Pancreas (tissue), 10 donors: ENCODE measurements at regions of chr15 and their contacts with region 1.

Region 1: DNA sequence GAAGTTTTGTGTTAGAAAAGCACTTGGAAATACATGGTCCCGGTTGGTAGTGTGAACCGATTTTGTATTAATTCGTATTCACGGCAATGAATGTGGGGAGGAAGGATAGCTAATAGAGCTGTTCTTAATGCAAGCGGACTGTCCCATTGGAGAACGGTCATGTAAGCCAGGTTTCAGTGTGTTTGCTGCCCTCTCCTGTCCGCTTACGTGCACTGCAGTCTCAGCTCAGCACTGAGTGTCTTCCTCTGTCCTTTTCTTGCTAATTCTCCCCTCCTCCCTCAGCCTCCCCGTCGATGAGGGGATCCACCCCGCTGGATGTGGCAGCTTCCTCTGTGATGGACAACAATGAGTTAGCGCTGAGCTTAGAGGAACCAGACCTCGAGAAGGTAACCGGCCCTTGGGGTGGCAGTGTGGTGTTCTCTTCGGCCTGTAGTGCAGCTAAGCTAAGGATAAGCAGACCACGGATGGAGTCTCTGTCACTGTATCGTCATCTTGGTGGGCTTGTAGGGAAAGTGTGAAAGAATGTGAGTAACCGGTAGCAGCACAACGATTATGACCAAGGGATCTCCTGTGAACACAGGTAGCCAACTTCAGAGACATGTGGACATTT is 267.5 kb upstream of the CHRM5 start:
- DNase-seq: peak; percentile 32 to 79 (median 68)
- ATAC-seq: peak; percentile 76 to 98 (median 96)
- H3K4me3 ChIP-seq: no peak overlapping the region
- H3K27ac ChIP-seq: no peak overlapping the region
- H3K4me1 ChIP-seq: no peaks in the 10 kb centered on the region
- H3K27me3 ChIP-seq: no peaks in the 10 kb centered on the region
- CTCF ChIP-seq: peak; percentile 70 to 88 (median 82)

Region 2: DNA sequence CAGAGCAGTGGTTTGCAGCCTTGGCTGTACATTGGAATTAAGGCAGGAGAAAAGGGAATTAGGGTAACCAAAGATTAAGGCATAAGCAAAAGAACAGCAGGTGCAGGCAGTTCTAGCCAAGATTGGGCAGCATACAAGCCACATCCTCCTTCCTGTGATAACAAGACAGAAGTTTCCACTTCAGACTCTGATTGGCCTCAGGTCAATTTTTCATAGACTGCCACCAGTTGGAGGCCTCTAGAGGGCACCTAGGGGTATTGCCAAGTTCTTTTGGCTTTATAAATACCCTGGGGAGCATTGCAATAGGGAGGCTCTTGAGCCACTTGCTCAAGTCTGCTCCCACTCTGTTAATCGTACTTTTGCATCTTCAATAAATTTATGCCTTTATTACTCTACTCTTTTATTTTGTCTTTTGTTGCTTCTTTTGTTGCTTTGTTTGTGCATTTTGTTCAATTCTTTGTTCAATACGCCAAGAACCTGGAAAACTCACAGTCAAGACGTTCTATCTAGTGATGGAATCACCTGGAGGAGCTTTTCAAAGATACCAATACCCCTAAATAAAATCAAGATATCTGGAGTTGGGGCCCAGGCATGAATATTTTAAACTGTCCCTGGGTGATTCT is 474.1 kb before region 1 on chr15:
- intact Hi-C with region 1: loop called in 1 of 3 experiments (anchors 10 kb)
- DNase-seq: peak in 4 of 6 donors; percentile 6 to 38 (median 16)
- ATAC-seq: peak; percentile 86 to 93 (median 86)
- H3K4me3 ChIP-seq: no peak overlapping the region
- H3K27ac ChIP-seq: no peak overlapping the region
- H3K4me1 ChIP-seq: no peaks in the 10 kb centered on the region
- H3K27me3 ChIP-seq: no peaks in the 10 kb centered on the region
- CTCF ChIP-seq: peak in 3 of 4 donors; percentile 21 to 33 (median 30)

Region 3: GRCh38 chr15:33292717-33293307 is 408.0 kb before region 1 on chr15:
- intact Hi-C with region 1: loop called in 2 of 3 experiments (anchors 5 to 10 kb)
- DNase-seq: peak in 5 of 6 donors; percentile 19 to 63 (median 31)
- ATAC-seq: peak; percentile 61 to 87 (median 82)
- H3K4me3 ChIP-seq: no peak overlapping the region
- H3K27ac ChIP-seq: no peak overlapping the region
- H3K4me1 ChIP-seq: no peaks in the 10 kb centered on the region
- H3K27me3 ChIP-seq: peaks cover 0 to 8% (median 3%) of the 10 kb centered on the region in 4 donors
- CTCF ChIP-seq: peak; percentile 12 to 56 (median 52)

Region 4: DNA sequence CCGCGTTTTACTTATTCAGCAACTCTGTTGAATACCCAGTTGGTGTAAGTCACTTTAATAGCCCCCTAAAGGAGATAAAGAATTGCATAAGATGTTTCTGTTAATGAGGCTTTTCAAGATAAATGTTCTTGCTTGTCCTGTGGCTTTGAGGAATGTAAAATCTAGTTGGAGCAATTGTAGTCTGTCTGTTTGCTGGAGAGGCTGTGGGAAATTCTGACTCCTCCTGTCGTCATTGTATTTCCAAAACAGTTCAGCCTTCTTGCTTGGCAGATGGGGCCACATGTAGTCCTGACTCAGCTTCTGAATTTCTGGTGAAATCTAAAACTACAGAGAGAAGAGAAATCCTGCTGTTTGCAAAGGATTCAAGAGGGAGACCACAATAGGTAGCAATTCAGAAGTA is 275.7 kb before region 1 on chr15:
- intact Hi-C with region 1: no loop called
- DNase-seq: no peak
- ATAC-seq: no peak
- H3K4me3 ChIP-seq: no peak overlapping the region
- H3K27ac ChIP-seq: no peak overlapping the region
- H3K4me1 ChIP-seq: no peaks in the 10 kb centered on the region
- H3K27me3 ChIP-seq: no peaks in the 10 kb centered on the region
- CTCF ChIP-seq: no peak